ENCODE measurements at regions of chr5 and their contacts with region 1.

Region 1: GRCh38 chr5:142324871-142325724 is at the start of gene SPRY4:
- DNase-seq: peak; percentile 95 to 98
- ATAC-seq: peak; percentile 91
- H3K4me3 ChIP-seq: peak within 1 kb of the TSS; percentile 72 to 90
- H3K27ac ChIP-seq: peak within 1 kb of the TSS; percentile 85 to 99
- H3K4me1 ChIP-seq: peaks cover 0 to 11% of the 10 kb centered on the region in 2 donors
- H3K27me3 ChIP-seq: no peaks in the 10 kb centered on the region
- total RNA-seq, gene SPRY4: 49.8 to 67.9 TPM

Region 2: GRCh38 chr5:142356716-142357473 is 31.8 kb after region 1 on chr5:
- intact Hi-C with region 1: loop called (anchors 5 kb)
- DNase-seq: peak; percentile 92 to 94
- ATAC-seq: peak; percentile 90
- H3K4me3 ChIP-seq: peak overlapping the region; percentile 57 to 92
- H3K27ac ChIP-seq: peak overlapping the region; percentile 92 to 97
- H3K4me1 ChIP-seq: no peaks in the 10 kb centered on the region
- H3K27me3 ChIP-seq: no peaks in the 10 kb centered on the region

Measured in aorta (tissue), 5 donors.